CD8-positive, alpha-beta T cell (primary cell): ENCODE measurements at regions of chr5 and their contacts with region 1.

Region 1: DNA sequence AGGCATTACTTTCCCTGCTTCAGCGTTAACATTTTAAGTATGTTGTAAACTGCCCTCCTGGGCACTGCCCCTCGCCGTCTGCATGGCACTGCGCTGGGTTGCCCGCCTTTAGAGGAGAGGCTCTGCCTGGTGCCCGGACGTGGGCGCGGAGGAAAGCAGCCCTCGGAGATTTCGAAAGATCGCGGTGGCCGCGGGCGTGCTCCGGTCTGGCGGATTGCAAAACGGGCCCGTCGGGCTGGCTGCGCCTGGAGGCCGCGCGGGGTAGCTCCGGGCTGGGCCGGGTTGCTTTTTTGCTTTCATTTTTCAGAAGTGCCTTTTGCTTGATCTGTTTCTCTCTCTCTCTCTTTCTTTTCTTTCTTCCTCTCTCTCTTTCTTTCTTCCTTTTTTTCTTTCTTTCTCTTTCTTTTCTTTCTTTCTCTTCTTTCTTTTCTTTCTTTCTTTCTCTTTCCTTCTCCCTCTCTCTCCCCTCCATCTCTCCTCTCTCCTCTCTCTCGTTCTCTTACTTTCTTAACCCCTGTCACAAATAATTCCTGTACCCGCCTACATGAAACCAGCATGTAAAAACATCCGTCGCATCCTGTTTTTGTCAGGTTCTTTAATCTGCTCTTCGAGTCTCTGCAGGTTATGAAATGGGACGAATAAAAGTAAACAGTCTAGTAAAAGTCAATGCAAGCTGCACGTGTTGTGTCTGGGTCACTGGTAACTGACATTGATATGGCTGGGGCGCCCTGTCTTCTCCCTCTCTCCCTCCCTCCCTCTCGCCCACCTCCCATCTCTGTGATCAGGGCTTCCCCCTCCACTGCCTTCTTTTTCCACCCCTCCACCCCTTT is 1.7 kb downstream of the FST start:
- DNase-seq: peak in 7 of 9 experiments; percentile 35 to 72 (median 53)
- ATAC-seq: peak; percentile 68
- H3K4me3 ChIP-seq: peak overlapping the region; percentile 48 to 60
- H3K4me3 Mint-ChIP-seq: peak overlapping the region; percentile 86
- H3K27ac ChIP-seq: no peak overlapping the region
- H3K27ac Mint-ChIP-seq: peak overlapping the region; percentile 43
- H3K4me1 ChIP-seq: peaks cover 12% of the 10 kb centered on the region
- H3K4me1 Mint-ChIP-seq: peaks cover 39% of the 10 kb centered on the region
- H3K27me3 ChIP-seq: peaks cover 13 to 14% of the 10 kb centered on the region in 2 experiments
- H3K27me3 Mint-ChIP-seq: peaks cover 47% of the 10 kb centered on the region
- CTCF ChIP-seq: peak; percentile 29

Region 2: DNA sequence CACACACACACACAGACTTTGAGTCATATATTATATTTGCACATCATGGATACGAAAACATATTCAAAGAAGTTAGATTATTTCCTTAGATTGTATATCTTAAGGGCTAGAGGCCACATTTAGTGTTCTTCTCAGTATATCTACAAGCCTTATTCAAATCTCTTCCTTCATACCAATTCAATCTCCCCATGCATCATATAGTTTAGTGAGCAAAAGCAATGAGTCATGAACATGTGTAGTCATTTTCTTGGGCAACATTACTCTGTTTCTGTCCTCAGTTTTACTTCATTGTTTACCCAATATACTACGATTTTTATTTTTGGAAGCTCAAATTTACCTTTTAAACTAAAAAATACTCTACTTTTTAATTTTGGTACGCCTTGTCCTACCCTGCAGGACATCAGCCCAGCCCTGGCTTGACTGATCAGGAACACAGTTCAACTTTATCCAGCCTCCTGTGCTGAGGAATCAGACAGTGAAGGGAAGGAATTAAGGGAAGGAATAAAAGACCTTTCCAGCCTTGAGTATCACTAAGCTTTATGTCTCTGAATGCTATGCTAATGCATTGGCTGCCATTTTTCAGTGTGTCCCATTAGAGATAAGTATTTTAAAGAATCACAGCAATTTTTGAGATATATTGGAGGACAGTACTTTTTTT is 103.4 kb before region 1 on chr5:
- CTCF ChIA-PET with region 1: no interaction called
- POLR2A ChIA-PET with region 1: no interaction called
- intact Hi-C with region 1: no loop called
- DNase-seq: no peak
- ATAC-seq: no peak
- H3K4me3 ChIP-seq: no peak overlapping the region
- H3K4me3 Mint-ChIP-seq: no peak overlapping the region
- H3K27ac ChIP-seq: no peak overlapping the region
- H3K27ac Mint-ChIP-seq: no peak overlapping the region
- H3K4me1 ChIP-seq: no peaks in the 10 kb centered on the region
- H3K4me1 Mint-ChIP-seq: no peaks in the 10 kb centered on the region
- H3K27me3 ChIP-seq: no peaks in the 10 kb centered on the region
- H3K27me3 Mint-ChIP-seq: no peaks in the 10 kb centered on the region
- CTCF ChIP-seq: no peak

Region 3: GRCh38 chr5:53560506-53561191 is 78.5 kb after region 1 on chr5 and contains the start of gene NDUFS4:
- CTCF ChIA-PET with region 1: no interaction called
- POLR2A ChIA-PET with region 1: no interaction called
- intact Hi-C with region 1: loop called in 1 of 2 experiments (anchors 5 kb)
- DNase-seq: peak; percentile 54 to 88 (median 78)
- ATAC-seq: peak; percentile 86
- H3K4me3 ChIP-seq: peak within 1 kb of the TSS; percentile 91 to 96
- H3K4me3 Mint-ChIP-seq: peak within 1 kb of the TSS; percentile 100
- H3K27ac ChIP-seq: peak within 1 kb of the TSS; percentile 81 to 84
- H3K27ac Mint-ChIP-seq: peak within 1 kb of the TSS; percentile 99
- H3K4me1 ChIP-seq: peaks cover 15% of the 10 kb centered on the region
- H3K4me1 Mint-ChIP-seq: peaks cover 47% of the 10 kb centered on the region
- H3K27me3 ChIP-seq: no peaks in the 10 kb centered on the region
- H3K27me3 Mint-ChIP-seq: peaks cover 14% of the 10 kb centered on the region
- CTCF ChIP-seq: no peak
- total RNA-seq, gene NDUFS4: 22.8 to 24.3 TPM

Region 4: GRCh38 chr5:54229041-54229780 is 747.1 kb after region 1 on chr5:
- CTCF ChIA-PET with region 1: interaction called, 17 read pairs
- POLR2A ChIA-PET with region 1: interaction called, 3 read pairs
- intact Hi-C with region 1: loop called (anchors 1 to 5 kb)
- DNase-seq: peak; percentile 43 to 80 (median 68)
- ATAC-seq: peak; percentile 89
- H3K4me3 ChIP-seq: no peak overlapping the region
- H3K4me3 Mint-ChIP-seq: no peak overlapping the region
- H3K27ac ChIP-seq: no peak overlapping the region
- H3K27ac Mint-ChIP-seq: no peak overlapping the region
- H3K4me1 ChIP-seq: no peaks in the 10 kb centered on the region
- H3K4me1 Mint-ChIP-seq: peaks cover 8% of the 10 kb centered on the region
- H3K27me3 ChIP-seq: no peaks in the 10 kb centered on the region
- H3K27me3 Mint-ChIP-seq: no peaks in the 10 kb centered on the region
- CTCF ChIP-seq: peak; percentile 96